Activated CD4-positive, alpha-beta T cell treated with anti-CD3 and anti-CD28 coated beads for 36 hours (primary cell): ENCODE measurements at regions of chr17 and their contacts with region 1.

Region 1: GRCh38 chr17:59800530-59800942 is 92.2 kb downstream of the TUBD1 start:
- DNase-seq: peak; percentile 34
- ATAC-seq: peak; percentile 81
- H3K4me3 Mint-ChIP-seq: no peak overlapping the region
- H3K27ac Mint-ChIP-seq: no peak overlapping the region
- H3K4me1 Mint-ChIP-seq: peaks cover 34% of the 10 kb centered on the region
- H3K27me3 Mint-ChIP-seq: no peaks in the 10 kb centered on the region

Region 2: DNA sequence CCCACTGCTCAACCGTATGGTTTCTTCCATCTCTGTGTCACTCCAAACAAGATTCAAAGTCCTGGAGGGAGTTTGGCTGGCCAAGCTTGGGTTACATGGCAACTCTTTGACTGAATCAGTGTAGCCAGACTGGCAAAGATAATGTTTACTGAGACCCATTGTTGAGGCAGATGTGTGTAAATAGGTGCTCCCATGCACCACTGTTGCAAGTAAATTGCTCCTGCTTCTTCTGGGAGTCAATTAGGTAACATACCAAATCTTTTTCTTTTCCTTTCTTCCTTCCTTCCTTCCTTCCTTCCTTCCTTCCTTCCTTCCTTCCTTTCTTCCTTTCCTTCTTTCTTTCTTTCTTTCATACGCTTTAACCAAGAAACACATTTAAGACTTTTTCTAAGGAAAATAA is 321.4 kb before region 1 on chr17:
- CTCF ChIA-PET with region 1: no interaction called
- POLR2A ChIA-PET with region 1: no interaction called
- intact Hi-C with region 1: no loop called
- DNase-seq: no peak
- ATAC-seq: no peak
- H3K4me3 Mint-ChIP-seq: no peak overlapping the region
- H3K27ac Mint-ChIP-seq: no peak overlapping the region
- H3K4me1 Mint-ChIP-seq: peaks cover 3% of the 10 kb centered on the region
- H3K27me3 Mint-ChIP-seq: peaks cover 5% of the 10 kb centered on the region

Region 3: GRCh38 chr17:59914274-59914854 is 113.8 kb after region 1 on chr17:
- CTCF ChIA-PET with region 1: no interaction called
- POLR2A ChIA-PET with region 1: interaction called, 10 read pairs
- intact Hi-C with region 1: no loop called
- DNase-seq: no peak
- ATAC-seq: no peak
- H3K4me3 Mint-ChIP-seq: no peak overlapping the region
- H3K27ac Mint-ChIP-seq: no peak overlapping the region
- H3K4me1 Mint-ChIP-seq: no peaks in the 10 kb centered on the region
- H3K27me3 Mint-ChIP-seq: no peaks in the 10 kb centered on the region